A549 (cell line): ENCODE measurements at regions of chr2 and their contacts with region 1.

Region 1: DNA sequence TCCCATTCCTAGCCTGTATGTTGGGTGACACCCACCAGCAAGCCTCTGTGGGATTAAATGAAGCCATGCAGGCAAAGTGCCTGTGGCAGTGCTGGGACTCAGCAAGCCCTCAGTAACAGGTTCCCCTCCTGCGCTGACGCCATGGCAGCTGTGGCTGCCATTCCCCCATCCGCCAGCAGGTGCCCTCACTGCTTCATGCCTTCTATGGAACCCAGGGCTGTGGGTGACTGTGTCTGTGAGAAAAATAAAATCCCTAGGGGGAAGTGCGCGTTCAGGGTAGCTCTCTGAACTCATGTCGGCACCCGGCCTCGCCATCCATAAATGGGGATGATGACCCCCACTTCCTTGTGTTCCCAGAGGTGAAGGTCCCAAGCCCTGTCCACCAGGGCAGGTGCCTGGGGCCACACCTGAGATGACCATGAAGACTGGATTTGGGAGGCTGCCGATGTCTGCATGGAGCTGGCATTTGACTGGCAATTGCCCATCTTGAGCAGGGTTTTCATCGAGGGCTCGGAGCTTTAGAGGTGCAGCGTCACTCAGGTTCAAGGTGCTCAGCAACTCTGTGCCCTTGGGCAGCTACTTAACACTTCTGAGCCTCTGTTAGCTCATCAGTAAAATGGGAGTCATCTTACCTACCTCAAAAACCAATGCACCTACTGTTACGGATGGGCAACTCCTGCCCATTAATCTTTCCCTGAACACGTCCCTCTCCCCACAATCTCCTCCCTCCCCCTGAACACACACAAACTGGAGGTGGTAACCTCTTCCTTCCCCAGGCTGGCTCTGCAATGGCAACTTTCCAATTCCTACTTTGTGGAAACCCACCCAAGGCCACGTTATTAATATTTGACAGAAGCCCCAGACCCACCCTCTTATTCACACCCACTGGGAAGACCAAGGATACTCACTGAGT is 2.9 kb upstream of the MAL start:
- DNase-seq: peak; percentile 59 to 67
- ATAC-seq: peak; percentile 72 to 89
- H3K4me3 ChIP-seq: no peak overlapping the region
- H3K27ac ChIP-seq: no peak overlapping the region
- H3K4me1 ChIP-seq: 0 out of 3 replicates have a peak, but pooled peaks cover 3% of the 10 kb centered on the region
- CTCF ChIP-seq: peak; percentile 70
- EP300 ChIP-seq: no peak
- POLR2A ChIP-seq: no peak
- RAD21 ChIP-seq: peak; percentile 67 to 84; a peak in 4 of 5 replicates

Region 2: DNA sequence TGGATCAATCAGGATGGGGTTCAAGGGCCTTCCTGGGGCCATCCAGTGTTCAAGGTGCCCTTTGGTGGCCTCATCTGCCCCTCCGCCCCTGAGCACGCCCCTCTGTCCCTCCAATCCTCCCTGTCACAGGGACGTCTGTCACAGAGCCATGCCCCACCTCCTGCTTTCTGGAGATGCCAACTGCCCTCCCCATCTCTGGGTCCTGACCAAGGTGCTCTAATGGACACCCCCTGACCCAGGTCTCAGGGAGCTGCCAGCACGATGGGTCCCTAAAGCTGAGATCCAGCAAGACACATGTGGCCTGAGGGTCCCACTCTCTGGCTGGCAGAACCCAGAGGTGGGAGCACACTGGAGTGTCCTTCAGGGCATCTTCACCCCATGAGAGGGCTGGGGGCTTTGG is 153.4 kb before region 1 on chr2:
- CTCF ChIA-PET with region 1: no interaction called
- POLR2A ChIA-PET with region 1: no interaction called
- DNase-seq: no peak
- ATAC-seq: no peak
- H3K4me3 ChIP-seq: no peak overlapping the region
- H3K27ac ChIP-seq: no peak overlapping the region
- H3K4me1 ChIP-seq: no peaks in the 10 kb centered on the region; the same call in 2 of the 3 replicates
- CTCF ChIP-seq: no peak
- EP300 ChIP-seq: no peak
- POLR2A ChIP-seq: no peak
- RAD21 ChIP-seq: no peak

Region 3: DNA sequence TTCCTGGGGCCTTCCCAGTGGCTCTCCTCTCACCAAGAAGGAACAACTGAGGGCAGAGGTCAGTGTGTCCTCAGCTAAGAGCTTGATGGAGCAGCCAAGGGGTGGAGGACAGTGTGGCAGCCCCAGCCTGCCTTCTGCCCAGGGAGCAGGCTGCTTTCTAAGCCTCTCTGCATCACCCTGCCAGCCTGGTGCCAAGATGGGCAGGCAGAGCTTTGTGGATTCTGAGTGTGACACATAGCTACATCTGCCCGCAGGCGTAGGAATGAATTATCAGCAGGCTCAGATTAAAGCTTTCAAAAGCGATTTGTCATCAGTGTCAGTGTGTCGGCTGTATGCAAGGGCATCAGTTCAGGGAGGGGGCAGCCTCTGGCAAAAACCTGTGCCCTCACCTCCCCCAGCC is 11.7 kb after region 1 on chr2:
- CTCF ChIA-PET with region 1: interaction called, 29 read pairs
- POLR2A ChIA-PET with region 1: no interaction called
- DNase-seq: no peak
- ATAC-seq: peak; percentile 38 to 47; a peak in 4 of 6 replicates
- H3K4me3 ChIP-seq: no peak overlapping the region
- H3K27ac ChIP-seq: no peak overlapping the region
- H3K4me1 ChIP-seq: no peaks in the 10 kb centered on the region
- CTCF ChIP-seq: no peak
- EP300 ChIP-seq: no peak
- POLR2A ChIP-seq: no peak
- RAD21 ChIP-seq: no peak

Region 4: GRCh38 chr2:95053543-95053942 is 31.0 kb after region 1 on chr2:
- CTCF ChIA-PET with region 1: interaction called, 26 read pairs
- POLR2A ChIA-PET with region 1: no interaction called
- DNase-seq: peak in 1 of 2 experiments; percentile 37
- ATAC-seq: peak; percentile 40 to 62; a peak in 3 of 6 replicates
- H3K4me3 ChIP-seq: no peak overlapping the region
- H3K27ac ChIP-seq: no peak overlapping the region
- H3K4me1 ChIP-seq: no peaks in the 10 kb centered on the region
- CTCF ChIP-seq: no peak; the same call in 2 of the 3 replicates
- EP300 ChIP-seq: no peak
- POLR2A ChIP-seq: no peak
- RAD21 ChIP-seq: peak in 1 of 2 experiments; percentile 31; a peak in 2 of 5 replicates